Gastrocnemius medialis (tissue), 4 donors: ENCODE measurements at regions of chr18 and their contacts with region 1.

Region 1: GRCh38 chr18:45967007-45967706 is at the start of gene EPG5:
- DNase-seq: peak; percentile 95 to 97
- ATAC-seq: peak; percentile 98 to 99
- H3K4me3 ChIP-seq: peak within 1 kb of the TSS; percentile 73 to 96 (median 95)
- H3K27ac ChIP-seq: peak within 1 kb of the TSS; percentile 87 to 92 (median 91)
- H3K4me1 ChIP-seq: peaks cover 15 to 21% of the 10 kb centered on the region in 2 donors
- H3K27me3 ChIP-seq: no peaks in the 10 kb centered on the region
- CTCF ChIP-seq: no peak
- POLR2A ChIP-seq: peak; percentile 65 to 87
- total RNA-seq, gene EPG5: 18.7 to 30.3 (median 24.0) TPM

Region 2: DNA sequence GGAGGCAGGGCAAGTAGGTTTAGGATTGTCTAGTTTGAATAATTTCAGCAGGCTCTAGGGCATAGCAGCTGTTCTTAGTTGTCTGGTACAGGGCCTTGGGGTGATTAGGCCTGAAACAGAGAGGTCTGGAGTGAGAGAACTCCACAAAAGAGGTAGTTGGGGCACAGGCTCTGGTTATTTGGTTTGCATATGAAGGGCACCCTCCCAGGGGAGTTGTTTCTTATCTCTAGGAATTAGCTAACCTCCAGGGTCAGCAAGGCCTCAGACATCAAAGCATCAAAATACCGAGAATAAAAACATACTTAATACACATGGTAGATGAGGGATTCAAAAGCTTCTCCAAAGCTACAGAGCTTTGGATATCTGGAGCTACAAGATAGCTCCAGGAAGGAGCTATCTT is 390.2 kb before region 1 on chr18:
- in situ Hi-C with region 1: no loop called
- intact Hi-C with region 1: no loop called
- DNase-seq: no peak
- ATAC-seq: no peak
- H3K4me3 ChIP-seq: no peak overlapping the region
- H3K27ac ChIP-seq: no peak overlapping the region
- H3K4me1 ChIP-seq: no peaks in the 10 kb centered on the region
- H3K27me3 ChIP-seq: no peaks in the 10 kb centered on the region
- CTCF ChIP-seq: no peak
- POLR2A ChIP-seq: no peak

Region 3: DNA sequence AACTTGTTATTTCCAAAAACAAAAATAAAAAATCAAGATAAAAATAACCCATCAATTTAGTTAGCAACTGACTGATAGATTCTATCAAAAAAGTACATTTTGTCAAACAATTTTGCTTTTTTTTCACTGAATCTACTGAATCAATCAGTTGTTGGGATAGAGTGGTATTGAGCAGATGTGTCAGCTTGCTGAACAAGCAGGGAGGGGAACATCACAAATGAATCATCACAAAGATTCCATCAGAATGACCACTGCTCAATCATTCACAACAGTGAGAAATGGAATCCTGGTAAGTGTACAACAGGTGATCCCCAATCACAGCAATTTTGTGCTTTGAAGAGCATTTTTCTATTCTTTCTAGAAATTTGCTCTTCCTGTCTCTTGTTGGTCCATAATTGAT is 364.2 kb before region 1 on chr18:
- in situ Hi-C with region 1: no loop called
- intact Hi-C with region 1: no loop called
- DNase-seq: no peak
- ATAC-seq: no peak
- H3K4me3 ChIP-seq: no peak overlapping the region
- H3K27ac ChIP-seq: no peak overlapping the region
- H3K4me1 ChIP-seq: no peaks in the 10 kb centered on the region
- H3K27me3 ChIP-seq: no peaks in the 10 kb centered on the region
- CTCF ChIP-seq: no peak
- POLR2A ChIP-seq: no peak

Region 4: DNA sequence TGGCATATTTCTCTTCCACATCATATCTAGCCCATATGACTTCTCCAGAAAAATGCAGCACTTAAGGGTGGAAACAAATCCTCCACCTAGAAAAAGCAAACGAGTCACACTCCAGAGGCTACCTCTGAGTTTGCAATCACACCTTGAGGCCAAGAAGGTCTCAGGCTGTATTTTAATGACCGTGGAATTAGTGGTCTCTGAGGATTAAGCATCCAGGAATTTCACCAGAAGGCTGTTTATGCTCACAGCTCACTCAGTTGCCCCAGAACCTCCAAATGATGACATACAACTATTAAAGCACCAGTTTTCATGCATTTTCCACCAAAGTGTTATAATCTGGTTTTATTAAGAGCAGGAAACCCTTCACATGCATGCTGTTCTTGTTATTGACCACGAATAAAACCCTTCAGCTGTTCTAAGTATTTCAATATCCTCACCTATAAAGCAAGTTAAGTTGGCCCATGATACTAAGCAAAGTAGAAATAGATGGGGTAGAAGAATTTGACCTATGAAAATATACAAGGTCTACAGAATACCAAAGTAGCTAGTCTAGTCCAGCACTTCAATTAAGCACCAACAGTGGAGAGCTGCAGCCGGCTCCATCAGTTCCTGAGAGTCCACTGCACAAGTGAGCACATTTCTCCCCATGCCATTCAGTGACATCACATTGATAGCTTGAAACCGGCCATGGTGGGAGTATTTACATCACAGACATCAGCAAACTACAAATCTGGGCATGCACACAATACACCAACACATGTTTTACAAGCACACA is 282.6 kb before region 1 on chr18:
- in situ Hi-C with region 1: no loop called
- intact Hi-C with region 1: no loop called
- DNase-seq: no peak
- ATAC-seq: no peak
- H3K4me3 ChIP-seq: no peak overlapping the region
- H3K27ac ChIP-seq: no peak overlapping the region
- H3K4me1 ChIP-seq: no peaks in the 10 kb centered on the region
- H3K27me3 ChIP-seq: no peaks in the 10 kb centered on the region
- CTCF ChIP-seq: no peak
- POLR2A ChIP-seq: no peak

Region 5: GRCh38 chr18:45920367-45920766 is 46.8 kb before region 1 on chr18:
- in situ Hi-C with region 1: no loop called
- intact Hi-C with region 1: loop called (anchors 5 kb)
- DNase-seq: peak; percentile 50 to 77
- ATAC-seq: peak; percentile 85
- H3K4me3 ChIP-seq: no peak overlapping the region
- H3K27ac ChIP-seq: peak overlapping the region in 1 of 4 donors; percentile 19
- H3K4me1 ChIP-seq: peaks cover 6 to 12% of the 10 kb centered on the region in 2 donors
- H3K27me3 ChIP-seq: no peaks in the 10 kb centered on the region
- CTCF ChIP-seq: no peak
- POLR2A ChIP-seq: no peak